ENCODE measurements at regions of chr7 and their contacts with region 1.

Region 1: DNA sequence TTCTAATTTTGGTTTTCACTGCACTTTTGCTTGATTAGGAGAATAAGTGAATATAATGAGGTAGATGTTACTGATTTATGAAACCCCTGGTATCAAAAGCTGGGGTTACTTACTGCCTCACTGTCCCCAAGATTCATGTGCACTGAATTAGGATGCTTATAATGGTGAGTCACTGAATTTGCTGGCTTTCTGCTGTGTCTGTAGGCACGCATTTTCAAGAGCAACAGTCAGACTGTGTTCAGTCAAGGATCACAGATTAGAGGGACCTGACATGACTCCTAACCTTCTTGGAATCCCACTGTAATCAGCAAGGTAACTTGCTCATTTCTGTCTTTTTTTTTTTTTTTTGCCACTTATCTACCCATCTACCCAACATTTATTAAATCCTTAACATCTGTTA is 59.7 kb downstream of the GPR85 start:
- DNase-seq: no peak
- H3K4me3 ChIP-seq: no peak overlapping the region
- CTCF ChIP-seq: no peak

Region 2: GRCh38 chr7:112770084-112770483 is 256.9 kb before region 1 on chr7:
- in situ Hi-C with region 1: loop called (anchors 10 kb)
- DNase-seq: peak; percentile 35
- H3K4me3 ChIP-seq: no peak overlapping the region
- CTCF ChIP-seq: no peak

Region 3: GRCh38 chr7:112959276-112959675 is 67.7 kb before region 1 on chr7:
- in situ Hi-C with region 1: no loop called
- DNase-seq: no peak
- H3K4me3 ChIP-seq: no peak overlapping the region
- CTCF ChIP-seq: no peak